ENCODE measurements at regions of chr3 and their contacts with region 1.

Region 1: GRCh38 chr3:32106280-32106928 is at the start of gene GPD1L:
- DNase-seq: peak; percentile 93 to 97
- ATAC-seq: peak; percentile 95 to 99 (median 97)
- H3K4me3 ChIP-seq: peak within 1 kb of the TSS; percentile 73 to 95 (median 92)
- H3K27ac ChIP-seq: peak within 1 kb of the TSS; percentile 74 to 92 (median 88)
- H3K4me1 ChIP-seq: peaks cover 0 to 51% (median 45%) of the 10 kb centered on the region in 9 donors
- H3K27me3 ChIP-seq: no peaks in the 10 kb centered on the region
- CTCF ChIP-seq: no peak
- total RNA-seq, gene GPD1L: 120 to 349 (median 186) TPM

Region 2: GRCh38 chr3:32045091-32045964 is 61.1 kb before region 1 on chr3:
- intact Hi-C with region 1: loop called in 2 of 10 experiments (anchors 5 kb)
- DNase-seq: peak in 1 of 2 donors; percentile 20
- ATAC-seq: peak; percentile 75 to 95 (median 83)
- H3K4me3 ChIP-seq: peak overlapping the region in 4 of 10 donors; percentile 15 to 22 (median 20)
- H3K27ac ChIP-seq: peak overlapping the region; percentile 30 to 80 (median 70)
- H3K4me1 ChIP-seq: peaks cover 0 to 21% (median 16%) of the 10 kb centered on the region in 9 donors
- H3K27me3 ChIP-seq: no peaks in the 10 kb centered on the region
- CTCF ChIP-seq: no peak

Region 3: DNA sequence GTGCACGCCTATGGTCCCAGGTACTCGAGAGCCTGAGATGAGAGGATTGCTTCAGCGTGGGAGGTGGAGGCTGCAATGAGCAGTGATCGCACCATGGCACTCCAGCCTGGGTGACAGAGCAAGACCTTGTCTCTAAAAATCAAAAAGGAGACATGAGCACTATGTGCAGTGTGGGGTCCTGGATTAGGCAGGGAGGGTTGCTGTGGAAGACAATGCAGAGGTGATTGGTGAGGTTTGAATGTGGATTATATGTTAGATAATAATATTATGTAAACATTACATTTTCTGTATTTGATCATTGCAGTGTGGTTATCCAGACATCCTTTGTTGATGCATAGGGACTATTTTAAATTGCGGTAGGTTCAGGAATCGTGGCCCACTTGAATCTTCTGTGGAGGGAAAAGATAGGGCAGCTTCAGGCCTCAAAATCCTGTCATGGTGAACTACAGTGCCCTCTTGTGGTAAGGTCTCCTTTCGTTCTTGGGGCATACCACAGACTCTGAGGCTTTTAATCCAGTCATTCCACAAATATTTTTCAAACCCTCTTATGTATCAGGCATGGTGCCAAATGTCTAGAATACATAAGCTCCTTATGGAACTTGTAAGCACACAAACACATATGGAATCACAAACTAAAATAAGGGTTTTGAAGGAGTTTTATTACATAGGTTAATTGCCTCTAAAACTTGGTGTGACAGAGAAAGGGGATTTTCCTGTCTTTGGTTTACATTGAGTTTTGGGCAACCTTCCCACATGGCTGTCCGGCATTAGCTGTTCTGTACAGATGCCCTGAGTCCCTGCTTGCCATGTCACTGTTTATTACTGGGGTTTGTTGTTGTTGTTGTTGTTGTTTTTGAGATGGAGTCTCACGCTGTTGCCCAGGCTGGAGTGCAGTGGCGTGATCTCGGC is 37.7 kb after region 1 on chr3:
- intact Hi-C with region 1: loop called in 2 of 10 experiments (anchors 2 to 5 kb)
- DNase-seq: peak in 1 of 2 donors; percentile 71
- ATAC-seq: peak; percentile 61 to 87 (median 80)
- H3K4me3 ChIP-seq: no peak overlapping the region
- H3K27ac ChIP-seq: no peak overlapping the region
- H3K4me1 ChIP-seq: peaks cover 0 to 43% (median 11%) of the 10 kb centered on the region in 9 donors
- H3K27me3 ChIP-seq: no peaks in the 10 kb centered on the region
- CTCF ChIP-seq: peak; percentile 55 to 90 (median 85)

Region 4: DNA sequence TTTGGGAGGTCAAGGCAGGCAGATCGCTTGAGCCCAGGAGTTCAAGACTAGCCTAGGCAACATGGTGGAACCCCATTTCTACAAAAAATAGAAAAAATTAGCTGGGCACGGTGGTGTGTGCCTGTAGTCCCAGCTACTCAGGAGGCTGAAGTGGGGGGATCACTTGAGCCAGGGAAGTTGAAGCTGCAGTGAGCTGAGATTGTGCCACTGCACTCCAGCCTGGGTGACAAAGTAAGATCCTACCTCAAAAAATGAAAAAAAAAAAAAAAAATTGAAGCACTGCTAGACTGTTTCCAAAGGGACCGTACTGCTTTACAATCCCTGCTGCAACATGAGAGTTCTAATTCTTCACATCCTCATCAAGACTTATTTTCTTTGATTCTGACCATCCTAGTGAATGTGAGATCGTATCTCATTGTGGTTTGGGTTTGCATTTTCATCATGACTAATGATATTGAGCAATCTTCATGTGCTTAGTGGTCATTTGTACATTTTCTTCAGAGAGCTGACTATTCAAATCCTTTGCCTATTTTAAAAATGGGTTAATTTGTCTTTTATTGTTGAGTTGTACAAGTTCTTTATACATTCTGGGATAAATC is 142.9 kb after region 1 on chr3:
- intact Hi-C with region 1: no loop called
- DNase-seq: no peak
- ATAC-seq: no peak
- H3K4me3 ChIP-seq: no peak overlapping the region
- H3K27ac ChIP-seq: no peak overlapping the region
- H3K4me1 ChIP-seq: peaks cover 0 to 10% (median 0%) of the 10 kb centered on the region in 9 donors
- H3K27me3 ChIP-seq: no peaks in the 10 kb centered on the region
- CTCF ChIP-seq: no peak